CD14-positive monocyte (primary cell): ENCODE measurements at regions of chr19 and their contacts with region 1.

Region 1: GRCh38 chr19:32674959-32675719 is at the start of gene ANKRD27:
- DNase-seq: peak; percentile 97 to 100 (median 98)
- H3K4me3 ChIP-seq: peak within 1 kb of the TSS; percentile 76 to 95 (median 87)
- H3K4me3 Mint-ChIP-seq: peak within 1 kb of the TSS; percentile 91 to 97
- H3K27ac ChIP-seq: peak within 1 kb of the TSS; percentile 50 to 82
- H3K27ac Mint-ChIP-seq: peak within 1 kb of the TSS in 5 of 7 donors; percentile 6 to 80 (median 71)
- H3K4me1 ChIP-seq: peaks cover 39 to 53% of the 10 kb centered on the region in 2 donors
- H3K4me1 Mint-ChIP-seq: peaks cover 43% of the 10 kb centered on the region
- H3K27me3 ChIP-seq: peaks cover 21 to 29% of the 10 kb centered on the region in 2 donors
- H3K27me3 Mint-ChIP-seq: peaks cover 33 to 43% (median 35%) of the 10 kb centered on the region in 3 donors
- CTCF ChIP-seq: no peak
- polyA plus RNA-seq, gene ANKRD27: 8.7 to 17.5 (median 14.5) TPM

Region 2: GRCh38 chr19:32405431-32406161 is 269.5 kb before region 1 on chr19 and contains the start of gene DPY19L3:
- intact Hi-C with region 1: loop called (anchors 10 kb)
- DNase-seq: peak; percentile 92 to 93 (median 92)
- H3K4me3 ChIP-seq: peak within 1 kb of the TSS; percentile 59 to 77 (median 70)
- H3K4me3 Mint-ChIP-seq: peak within 1 kb of the TSS; percentile 80 to 88
- H3K27ac ChIP-seq: peak within 1 kb of the TSS; percentile 85 to 90
- H3K27ac Mint-ChIP-seq: peak within 1 kb of the TSS; percentile 79 to 92 (median 90)
- H3K4me1 ChIP-seq: peaks cover 26 to 33% of the 10 kb centered on the region in 2 donors
- H3K4me1 Mint-ChIP-seq: peaks cover 30% of the 10 kb centered on the region
- H3K27me3 ChIP-seq: peaks cover 8 to 18% of the 10 kb centered on the region in 2 donors
- H3K27me3 Mint-ChIP-seq: peaks cover 25 to 28% (median 26%) of the 10 kb centered on the region in 3 donors
- CTCF ChIP-seq: no peak
- polyA plus RNA-seq, gene DPY19L3: 6.5 to 13.8 (median 7.7) TPM

Region 3: DNA sequence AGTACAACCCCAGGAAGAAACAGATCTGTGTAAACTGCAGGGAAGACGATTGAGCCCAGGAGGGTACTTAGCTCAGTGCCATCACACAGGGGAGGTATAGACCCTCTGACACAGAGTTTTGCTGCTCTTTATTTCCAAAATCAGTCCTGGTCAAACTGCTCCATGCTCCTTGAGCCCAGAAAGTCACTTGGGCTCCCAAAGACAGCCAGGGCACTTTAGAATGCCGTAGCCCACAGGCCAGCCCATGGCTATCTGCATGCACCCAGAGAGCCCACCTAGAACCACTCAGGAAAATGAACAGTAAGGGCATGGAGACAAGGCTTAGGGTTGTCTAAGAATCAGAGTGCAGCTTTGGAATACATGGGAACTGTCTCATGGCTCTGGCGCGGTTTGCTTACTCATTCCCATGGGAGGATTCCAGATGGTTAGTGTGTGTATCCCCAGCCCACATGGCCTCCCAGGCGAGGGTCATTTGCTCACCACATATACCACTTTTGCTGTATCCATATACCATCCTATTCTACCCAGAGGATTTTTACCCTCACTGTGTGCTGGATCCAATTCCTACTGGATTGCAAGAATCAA is 108.8 kb before region 1 on chr19:
- intact Hi-C with region 1: no loop called
- DNase-seq: no peak
- H3K4me3 ChIP-seq: no peak overlapping the region
- H3K4me3 Mint-ChIP-seq: no peak overlapping the region
- H3K27ac ChIP-seq: no peak overlapping the region
- H3K27ac Mint-ChIP-seq: no peak overlapping the region
- H3K4me1 ChIP-seq: no peaks in the 10 kb centered on the region
- H3K4me1 Mint-ChIP-seq: peaks cover 3% of the 10 kb centered on the region
- H3K27me3 ChIP-seq: peaks cover 2 to 4% of the 10 kb centered on the region in 2 donors
- H3K27me3 Mint-ChIP-seq: peaks cover 19 to 36% (median 35%) of the 10 kb centered on the region in 3 donors
- CTCF ChIP-seq: no peak

Region 4: GRCh38 chr19:32691291-32691951 is 16.3 kb after region 1 on chr19 and contains the start of gene NUDT19:
- intact Hi-C with region 1: loop called in 1 of 2 experiments (anchors 2 kb)
- DNase-seq: peak; percentile 54 to 65 (median 56)
- H3K4me3 ChIP-seq: peak within 1 kb of the TSS; percentile 57 to 82 (median 71)
- H3K4me3 Mint-ChIP-seq: peak within 1 kb of the TSS; percentile 84 to 95
- H3K27ac ChIP-seq: peak within 1 kb of the TSS; percentile 74 to 75
- H3K27ac Mint-ChIP-seq: peak within 1 kb of the TSS; percentile 82 to 93 (median 87)
- H3K4me1 ChIP-seq: peaks cover 54 to 59% of the 10 kb centered on the region in 2 donors
- H3K4me1 Mint-ChIP-seq: peaks cover 58% of the 10 kb centered on the region
- H3K27me3 ChIP-seq: no peaks in the 10 kb centered on the region
- H3K27me3 Mint-ChIP-seq: peaks cover 0 to 1% (median 0%) of the 10 kb centered on the region in 3 donors
- CTCF ChIP-seq: no peak
- polyA plus RNA-seq, gene NUDT19: 3.8 to 5.6 (median 4.6) TPM